Breast epithelium (tissue), 4 donors: ENCODE measurements at regions of chr3 and their contacts with region 1.

Region 1: DNA sequence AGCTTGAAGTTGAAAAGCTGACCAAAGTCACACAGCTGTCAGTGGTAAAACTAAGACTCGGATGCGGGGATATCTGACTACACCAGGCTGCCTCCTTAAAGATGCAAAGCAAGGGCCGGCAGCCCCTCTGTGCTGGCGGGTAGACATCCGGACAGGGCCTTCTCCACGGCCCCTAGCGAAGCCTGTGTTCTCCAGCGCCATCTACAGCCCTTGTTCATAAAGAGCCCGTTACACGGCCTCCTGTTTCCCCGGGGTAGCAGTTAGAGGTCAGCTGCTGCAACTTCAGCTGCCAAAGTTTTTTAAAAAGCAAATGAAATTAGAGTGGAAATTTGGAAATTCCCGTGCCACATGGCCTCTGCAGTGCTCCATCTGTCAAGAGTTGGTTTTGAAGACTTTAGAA is 383.0 kb downstream of the TBL1XR1 start:
- DNase-seq: no peak
- H3K4me3 ChIP-seq: no peak overlapping the region
- H3K27ac ChIP-seq: no peak overlapping the region
- H3K4me1 ChIP-seq: no peaks in the 10 kb centered on the region
- H3K27me3 ChIP-seq: no peaks in the 10 kb centered on the region
- CTCF ChIP-seq: no peak
- POLR2A ChIP-seq: no peak

Region 2: DNA sequence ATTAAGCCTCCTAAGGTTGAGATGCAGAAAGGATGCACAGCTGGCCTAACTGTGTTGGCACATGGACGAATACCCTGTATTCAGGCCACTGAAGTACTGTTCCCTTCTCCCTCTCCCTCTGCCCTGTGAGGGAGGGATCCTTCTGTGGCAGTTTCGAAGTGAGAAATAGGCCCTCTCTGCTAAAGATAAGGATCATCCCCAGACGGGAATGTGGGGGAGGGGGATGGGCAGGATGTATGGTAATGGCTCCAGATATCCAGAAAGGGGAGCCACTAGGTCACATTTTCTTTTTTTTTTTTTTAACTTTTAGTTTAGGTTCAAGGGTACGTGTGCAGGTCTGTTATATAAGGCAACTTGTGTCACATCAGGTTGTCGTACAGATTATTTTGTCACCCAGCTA is 80.1 kb before region 1 on chr3:
- intact Hi-C with region 1: no loop called
- DNase-seq: no peak
- H3K4me3 ChIP-seq: no peak overlapping the region
- H3K27ac ChIP-seq: no peak overlapping the region
- H3K4me1 ChIP-seq: no peaks in the 10 kb centered on the region
- H3K27me3 ChIP-seq: no peaks in the 10 kb centered on the region
- CTCF ChIP-seq: no peak
- POLR2A ChIP-seq: no peak

Region 3: GRCh38 chr3:176796371-176796770 is 17.9 kb before region 1 on chr3:
- intact Hi-C with region 1: no loop called
- DNase-seq: no peak
- H3K4me3 ChIP-seq: no peak overlapping the region
- H3K27ac ChIP-seq: no peak overlapping the region
- H3K4me1 ChIP-seq: no peaks in the 10 kb centered on the region
- H3K27me3 ChIP-seq: no peaks in the 10 kb centered on the region
- CTCF ChIP-seq: no peak
- POLR2A ChIP-seq: no peak

Region 4: GRCh38 chr3:177843093-177843734 is 1028.9 kb after region 1 on chr3:
- intact Hi-C with region 1: loop called (anchors 5 kb)
- DNase-seq: no peak
- H3K4me3 ChIP-seq: no peak overlapping the region
- H3K27ac ChIP-seq: no peak overlapping the region
- H3K4me1 ChIP-seq: no peaks in the 10 kb centered on the region
- H3K27me3 ChIP-seq: no peaks in the 10 kb centered on the region
- CTCF ChIP-seq: no peak
- POLR2A ChIP-seq: no peak